Psoas muscle (tissue), 8 donors: ENCODE measurements at regions of chr5 and their contacts with region 1.

Region 1: DNA sequence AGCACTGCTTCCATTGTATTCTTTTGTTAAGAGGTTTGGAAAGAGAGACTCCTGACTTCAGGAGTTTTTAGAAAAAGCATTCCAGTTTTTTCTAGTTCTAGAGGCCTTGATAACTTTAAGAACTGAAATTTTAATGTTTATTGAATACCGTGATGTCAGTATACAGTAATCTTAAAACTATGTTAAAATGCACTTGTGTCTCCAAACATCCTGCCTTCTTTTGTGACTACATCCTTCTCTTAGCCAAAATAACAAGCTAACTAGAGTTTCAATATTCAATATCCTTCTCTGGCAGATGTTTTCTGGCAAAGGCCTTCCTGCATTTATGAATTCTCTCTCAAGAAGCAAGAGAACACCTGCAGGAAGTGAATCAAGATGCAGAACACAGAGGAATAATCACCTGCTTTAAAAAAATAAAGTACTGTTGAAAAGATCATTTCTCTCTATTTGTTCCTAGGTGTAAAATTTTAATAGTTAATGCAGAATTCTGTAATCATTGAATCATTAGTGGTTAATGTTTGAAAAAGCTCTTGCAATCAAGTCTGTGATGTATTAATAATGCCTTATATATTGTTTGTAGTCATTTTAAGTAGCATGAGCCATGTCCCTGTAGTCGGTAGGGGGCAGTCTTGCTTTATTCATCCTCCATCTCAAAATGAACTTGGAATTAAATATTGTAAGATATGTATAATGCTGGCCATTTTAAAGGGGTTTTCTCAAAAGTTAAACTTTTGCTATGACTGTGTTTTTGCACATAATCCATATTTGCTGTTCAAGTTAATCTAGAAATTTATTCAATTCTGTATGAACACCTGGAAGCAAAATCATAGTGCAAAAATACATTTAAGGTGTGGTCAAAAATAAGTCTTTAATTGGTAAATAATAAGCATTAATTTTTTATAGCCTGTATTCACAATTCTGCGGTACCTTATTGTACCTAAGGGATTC is 43.1 kb downstream of the NDFIP1 start:
- DNase-seq: no peak
- ATAC-seq: peak in 2 of 4 donors; percentile 51 to 53
- H3K4me3 ChIP-seq: no peak overlapping the region
- H3K27ac ChIP-seq: no peak overlapping the region
- H3K4me1 ChIP-seq: no peaks in the 10 kb centered on the region
- H3K27me3 ChIP-seq: no peaks in the 10 kb centered on the region
- CTCF ChIP-seq: peak; percentile 86

Region 2: DNA sequence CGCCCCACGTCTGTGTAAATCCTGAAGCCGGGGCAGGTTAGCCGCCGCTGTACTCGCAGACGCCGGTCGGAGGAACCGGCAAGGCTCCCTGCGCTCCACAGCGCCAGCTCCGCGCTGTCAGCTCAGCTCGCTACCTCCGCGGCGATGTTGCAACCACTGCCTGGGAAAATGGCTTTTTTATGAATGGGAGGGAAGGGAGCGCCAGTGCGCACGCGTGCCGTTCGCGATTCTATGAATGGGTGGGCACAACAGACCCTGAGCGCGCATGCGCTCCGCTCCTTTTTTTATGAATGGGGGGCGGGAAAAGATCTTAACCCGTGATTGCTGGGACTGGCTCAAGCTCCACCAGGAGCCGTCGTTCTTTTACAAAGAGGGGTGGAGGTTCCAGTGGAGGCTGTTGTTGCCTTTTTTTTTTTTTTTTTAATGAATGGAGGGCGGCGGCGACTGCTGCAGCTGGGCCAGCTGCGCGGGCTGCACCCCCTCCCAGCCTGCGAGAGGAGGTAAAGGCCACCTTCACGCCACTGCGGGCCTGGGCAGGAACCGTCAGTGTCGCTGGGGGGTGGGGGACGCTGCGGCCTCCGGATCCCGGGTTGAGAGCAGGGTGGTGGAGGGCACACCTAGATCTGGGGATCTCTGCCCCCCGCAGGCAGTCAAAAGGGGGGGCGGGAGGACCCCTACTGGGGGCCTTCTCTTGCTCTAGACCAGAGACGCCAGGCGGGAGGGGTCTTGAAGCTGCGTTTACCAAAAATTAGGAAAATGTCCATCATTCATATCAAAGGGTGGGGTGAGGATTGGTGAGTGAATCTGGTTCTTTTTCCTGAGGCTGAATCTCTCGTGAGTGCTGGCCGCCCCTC is 173.4 kb after region 1 on chr5 and contains the start of gene SPRY4:
- intact Hi-C with region 1: loop called in 1 of 2 experiments (anchors 10 kb)
- DNase-seq: peak; percentile 91 to 95
- ATAC-seq: peak; percentile 74 to 86 (median 82)
- H3K4me3 ChIP-seq: peak within 1 kb of the TSS; percentile 73
- H3K27ac ChIP-seq: peak within 1 kb of the TSS; percentile 77
- H3K4me1 ChIP-seq: peaks cover 23% of the 10 kb centered on the region
- H3K27me3 ChIP-seq: peaks cover 0 to 50% (median 10%) of the 10 kb centered on the region in 3 donors
- CTCF ChIP-seq: no peak
- total RNA-seq, gene SPRY4: 5.3 to 6.3 (median 5.9) TPM

Region 3: GRCh38 chr5:142548739-142549275 is 397.1 kb after region 1 on chr5:
- intact Hi-C with region 1: loop called (anchors 1 to 10 kb)
- DNase-seq: no peak
- ATAC-seq: peak; percentile 57 to 80 (median 70)
- H3K4me3 ChIP-seq: no peak overlapping the region
- H3K27ac ChIP-seq: no peak overlapping the region
- H3K4me1 ChIP-seq: no peaks in the 10 kb centered on the region
- H3K27me3 ChIP-seq: peaks cover 0 to 19% (median 0%) of the 10 kb centered on the region in 3 donors
- CTCF ChIP-seq: peak; percentile 61

Region 4: GRCh38 chr5:142699184-142699720 is 547.5 kb after region 1 on chr5:
- intact Hi-C with region 1: loop called in 1 of 2 experiments (anchors 2 kb)
- DNase-seq: peak; percentile 85 to 92
- ATAC-seq: peak; percentile 86 to 91 (median 90)
- H3K4me3 ChIP-seq: no peak overlapping the region
- H3K27ac ChIP-seq: peak overlapping the region; percentile 80
- H3K4me1 ChIP-seq: peaks cover 25% of the 10 kb centered on the region
- H3K27me3 ChIP-seq: no peaks in the 10 kb centered on the region
- CTCF ChIP-seq: peak; percentile 99